ENCODE measurements at regions of chr2 and their contacts with region 1.

Region 1: DNA sequence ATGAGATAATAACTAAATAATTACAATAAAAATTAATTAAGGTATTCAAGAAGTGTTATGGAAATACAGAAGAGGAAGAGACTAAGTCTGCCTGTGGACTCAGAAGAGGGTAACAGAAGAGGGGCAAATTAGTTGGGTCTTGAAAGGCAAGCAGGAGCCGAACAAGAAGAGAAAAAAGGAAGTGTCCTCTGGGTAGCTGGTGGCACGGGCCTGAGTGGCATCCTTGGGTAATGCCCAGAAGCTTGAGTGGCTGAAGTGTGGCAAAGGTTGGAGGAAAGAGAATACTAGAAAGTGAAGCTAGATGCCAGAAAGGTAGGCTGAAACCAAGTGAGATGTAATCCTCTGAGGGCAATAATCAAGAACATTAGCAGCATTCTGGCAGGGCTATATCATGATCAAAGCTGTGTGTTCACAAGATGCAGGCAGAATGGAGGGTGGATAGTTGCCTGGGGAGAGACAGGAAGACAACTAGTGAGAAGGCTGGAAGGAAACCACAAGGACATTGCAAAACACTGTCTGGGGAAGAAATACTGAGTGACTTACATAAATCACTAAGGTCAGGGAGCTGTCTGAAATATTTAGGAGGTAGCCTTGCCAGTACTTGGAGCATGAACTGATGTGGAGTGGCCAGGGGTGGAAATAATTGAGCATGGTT is 16.2 kb downstream of the DOCK10 start:
- DNase-seq: no peak
- H3K4me3 Mint-ChIP-seq: peak overlapping the region; percentile 3
- H3K27ac Mint-ChIP-seq: peak overlapping the region; percentile 64
- H3K4me1 Mint-ChIP-seq: peaks cover 67% of the 10 kb centered on the region
- H3K27me3 Mint-ChIP-seq: no peaks in the 10 kb centered on the region

Region 2: DNA sequence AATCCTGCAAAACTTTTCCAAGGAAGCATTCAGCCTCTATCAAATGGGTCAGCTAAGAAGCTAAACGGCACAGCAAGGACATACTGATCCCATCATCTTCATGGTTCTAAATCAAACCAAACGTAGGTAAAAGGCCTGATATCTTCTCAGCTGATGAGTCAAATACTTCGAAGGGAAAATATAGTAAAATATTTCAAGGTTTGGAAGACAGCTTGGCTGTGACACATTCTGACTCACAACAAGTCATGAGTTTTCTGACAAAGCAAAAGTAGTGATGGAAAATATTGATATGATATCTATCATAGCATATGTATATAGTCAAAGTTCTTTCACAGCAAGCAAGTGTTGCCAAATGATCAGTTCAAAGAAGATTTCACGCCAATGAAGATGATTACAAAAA is 15.2 kb before region 1 on chr2:
- intact Hi-C with region 1: loop called (anchors 1 kb)
- DNase-seq: no peak
- H3K4me3 Mint-ChIP-seq: peak overlapping the region; percentile 57
- H3K27ac Mint-ChIP-seq: peak overlapping the region; percentile 90
- H3K4me1 Mint-ChIP-seq: peaks cover 75% of the 10 kb centered on the region
- H3K27me3 Mint-ChIP-seq: no peaks in the 10 kb centered on the region

Region 3: DNA sequence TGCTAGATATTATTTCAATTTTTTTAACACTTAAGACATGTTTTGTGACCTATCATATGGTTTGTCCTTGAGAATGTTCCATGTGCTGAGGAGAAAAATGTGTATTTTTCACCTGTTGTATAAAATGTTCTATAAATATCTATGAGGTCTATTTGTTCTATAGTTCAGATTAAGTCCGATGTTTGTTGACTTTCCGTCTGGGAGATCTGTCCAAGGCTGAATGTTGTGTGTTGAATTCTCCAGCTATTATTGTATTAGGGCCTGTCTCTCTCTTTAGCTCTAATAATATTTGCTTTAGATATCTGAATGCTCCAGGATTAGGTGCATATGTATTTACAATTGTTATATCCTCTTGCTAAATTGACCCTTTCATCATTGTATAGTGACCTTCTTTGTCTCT is 517.6 kb after region 1 on chr2:
- intact Hi-C with region 1: no loop called
- DNase-seq: no peak
- H3K4me3 Mint-ChIP-seq: no peak overlapping the region
- H3K27ac Mint-ChIP-seq: no peak overlapping the region
- H3K4me1 Mint-ChIP-seq: no peaks in the 10 kb centered on the region
- H3K27me3 Mint-ChIP-seq: peaks cover 3% of the 10 kb centered on the region

Measured in activated T-helper 1 cell treated with anti-CD3 and anti-CD28 coated beads, Interleukin-12 subunit alpha, Interleukin-12 subunit beta, Interleukin-2, Interleukin-4 antibody, amounts not matched to agents 30 ng/mL and 10 ng/mL and 1 ng/mL, durations not matched to agents 14 hours and 24 hours and 36 hours (primary cell).